ENCODE measurements at regions of chr12 and their contacts with region 1.

Region 1: GRCh38 chr12:26937875-26938700 is at the starts of genes FGFR1OP2 and INTS13:
- DNase-seq: peak; percentile 99 to 100
- ATAC-seq: peak; percentile 97 to 99 (median 98)
- H3K4me3 ChIP-seq: peak within 1 kb of the TSS; percentile 60 to 92 (median 86)
- H3K27ac ChIP-seq: peak within 1 kb of the TSS; percentile 86 to 99 (median 96)
- H3K4me1 ChIP-seq: peaks cover 0 to 71% (median 62%) of the 10 kb centered on the region in 9 donors
- H3K27me3 ChIP-seq: no peaks in the 10 kb centered on the region
- CTCF ChIP-seq: no peak
- total RNA-seq, gene FGFR1OP2: 22.3 to 37.9 (median 27.3) TPM
- total RNA-seq, gene INTS13: 14.1 to 22.2 (median 17.8) TPM

Region 2: DNA sequence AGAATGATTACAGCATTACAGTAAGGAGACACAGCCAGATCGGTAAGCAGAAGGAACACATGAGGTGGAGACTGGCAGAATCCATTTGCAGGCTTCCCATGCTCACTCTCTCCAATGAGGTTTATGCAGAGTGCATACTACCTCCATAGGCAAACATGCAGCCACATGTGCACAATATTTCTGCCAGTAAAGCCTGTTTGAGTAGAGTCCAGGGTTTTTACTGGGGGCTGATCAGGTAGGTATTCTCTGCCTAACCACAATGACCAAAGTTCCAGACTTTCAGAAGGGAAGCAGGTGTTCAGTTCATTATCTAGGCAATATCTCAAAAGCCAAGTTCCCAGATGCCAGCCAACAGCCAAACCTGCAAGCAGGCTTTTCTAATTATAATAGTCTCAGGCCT is 31.4 kb before region 1 on chr12:
- intact Hi-C with region 1: no loop called
- DNase-seq: no peak
- ATAC-seq: no peak
- H3K4me3 ChIP-seq: no peak overlapping the region
- H3K27ac ChIP-seq: no peak overlapping the region
- H3K4me1 ChIP-seq: peaks cover 0 to 6% (median 0%) of the 10 kb centered on the region in 9 donors
- H3K27me3 ChIP-seq: no peaks in the 10 kb centered on the region
- CTCF ChIP-seq: no peak

Region 3: GRCh38 chr12:27014085-27014858 is 76.2 kb after region 1 on chr12 and contains the start of gene TM7SF3:
- intact Hi-C with region 1: loop called in 9 of 10 experiments (anchors 1 to 5 kb)
- DNase-seq: peak; percentile 94
- ATAC-seq: peak; percentile 93 to 99 (median 96)
- H3K4me3 ChIP-seq: peak within 1 kb of the TSS; percentile 60 to 98 (median 79)
- H3K27ac ChIP-seq: peak within 1 kb of the TSS; percentile 73 to 95 (median 92)
- H3K4me1 ChIP-seq: peaks cover 0 to 54% (median 39%) of the 10 kb centered on the region in 9 donors
- H3K27me3 ChIP-seq: no peaks in the 10 kb centered on the region
- CTCF ChIP-seq: peak; percentile 92 to 99 (median 98)
- total RNA-seq, gene TM7SF3: 16.3 to 29.3 (median 23.7) TPM

Region 4: DNA sequence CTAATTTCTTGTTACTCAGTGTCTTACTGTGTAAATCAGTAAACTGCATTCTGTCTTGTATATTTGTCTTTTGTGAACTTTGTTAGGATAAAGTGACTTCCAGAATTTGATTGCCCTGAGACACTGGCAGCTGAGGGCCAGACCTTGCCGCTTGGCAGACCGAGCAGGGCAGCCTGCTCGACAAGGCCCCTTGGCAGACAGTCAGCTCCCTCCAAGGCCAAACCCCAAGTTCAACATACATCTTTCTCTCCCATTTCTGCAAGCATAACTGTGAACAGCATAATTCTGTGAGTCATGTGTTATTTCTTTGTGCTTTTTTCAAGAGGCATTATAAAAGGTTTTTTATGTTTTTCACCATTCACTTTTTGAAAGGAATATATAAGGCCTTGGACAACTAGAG is 355.4 kb after region 1 on chr12:
- intact Hi-C with region 1: loop called in 1 of 10 experiments (anchors 10 kb)
- DNase-seq: peak in 1 of 2 donors; percentile 42
- ATAC-seq: peak in 4 of 8 donors; percentile 30 to 71 (median 68)
- H3K4me3 ChIP-seq: no peak overlapping the region
- H3K27ac ChIP-seq: peak overlapping the region in 8 of 10 donors; percentile 11 to 87 (median 66)
- H3K4me1 ChIP-seq: peaks cover 0 to 100% (median 85%) of the 10 kb centered on the region in 9 donors
- H3K27me3 ChIP-seq: no peaks in the 10 kb centered on the region
- CTCF ChIP-seq: no peak

Region 5: GRCh38 chr12:27305673-27306456 is 367.8 kb after region 1 on chr12:
- intact Hi-C with region 1: loop called in 2 of 10 experiments (anchors 10 kb)
- DNase-seq: no peak
- ATAC-seq: peak in 4 of 8 donors; percentile 33 to 67 (median 46)
- H3K4me3 ChIP-seq: no peak overlapping the region
- H3K27ac ChIP-seq: peak overlapping the region in 4 of 10 donors; percentile 16 to 43 (median 34)
- H3K4me1 ChIP-seq: peaks cover 0 to 28% (median 6%) of the 10 kb centered on the region in 9 donors
- H3K27me3 ChIP-seq: no peaks in the 10 kb centered on the region
- CTCF ChIP-seq: peak; percentile 55 to 80 (median 71)

Region 6: GRCh38 chr12:27319409-27319808 is 381.3 kb after region 1 on chr12:
- intact Hi-C with region 1: loop called in 1 of 10 experiments (anchors 5 kb)
- DNase-seq: no peak
- ATAC-seq: no peak
- H3K4me3 ChIP-seq: no peak overlapping the region
- H3K27ac ChIP-seq: no peak overlapping the region
- H3K4me1 ChIP-seq: no peaks in the 10 kb centered on the region
- H3K27me3 ChIP-seq: no peaks in the 10 kb centered on the region
- CTCF ChIP-seq: no peak